Activated B cell treated with CpG ODN at 0.5 μM for 24 hours (primary cell): ENCODE measurements at regions of chr6 and their contacts with region 1.

Region 1: DNA sequence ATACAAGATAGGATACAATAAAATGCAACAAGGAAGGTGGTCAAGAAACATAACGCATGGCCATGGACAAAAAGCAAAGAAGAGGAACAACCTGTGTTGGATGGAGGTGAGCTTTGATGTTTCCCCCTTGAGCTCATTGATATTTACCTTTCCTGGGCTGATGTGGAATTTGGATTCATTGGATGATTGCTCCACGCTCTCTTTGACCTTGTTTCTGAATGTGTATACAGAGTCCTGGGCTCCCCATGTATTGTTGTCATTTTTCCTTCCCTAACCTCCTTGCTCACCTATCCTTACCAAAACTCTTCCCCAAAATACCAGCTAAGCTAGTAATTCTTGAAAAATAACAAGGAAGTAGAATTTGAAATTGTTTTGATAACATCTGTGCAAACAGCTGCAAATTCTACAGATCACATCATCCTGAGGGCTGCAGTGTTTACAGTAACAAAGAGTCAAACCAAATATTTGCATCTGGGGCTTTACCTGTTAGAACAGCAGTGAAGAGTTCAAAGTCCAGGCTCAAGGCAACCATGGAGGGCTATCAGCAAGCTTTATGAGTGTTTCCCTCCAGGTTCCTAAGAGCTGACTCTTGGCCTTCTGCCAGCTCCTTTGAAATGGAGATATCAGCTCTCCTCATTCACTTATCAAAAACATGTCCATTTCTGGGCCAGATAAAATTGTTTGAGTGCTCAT is 214.3 kb upstream of the MARCKS start:
- DNase-seq: no peak
- ATAC-seq: peak; percentile 66
- H3K4me3 Mint-ChIP-seq: peak overlapping the region; percentile 2
- H3K27ac Mint-ChIP-seq: peak overlapping the region; percentile 54
- H3K4me1 Mint-ChIP-seq: peaks cover 53% of the 10 kb centered on the region
- H3K27me3 Mint-ChIP-seq: no peaks in the 10 kb centered on the region
- CTCF ChIP-seq: no peak

Region 2: GRCh38 chr6:113596387-113597230 is 46.3 kb before region 1 on chr6:
- CTCF ChIA-PET with region 1: no interaction called
- POLR2A ChIA-PET with region 1: interaction called, 10 read pairs
- intact Hi-C with region 1: no loop called
- DNase-seq: no peak
- ATAC-seq: peak; percentile 10
- H3K4me3 Mint-ChIP-seq: no peak overlapping the region
- H3K27ac Mint-ChIP-seq: no peak overlapping the region
- H3K4me1 Mint-ChIP-seq: peaks cover 38% of the 10 kb centered on the region
- H3K27me3 Mint-ChIP-seq: no peaks in the 10 kb centered on the region
- CTCF ChIP-seq: no peak

Region 3: DNA sequence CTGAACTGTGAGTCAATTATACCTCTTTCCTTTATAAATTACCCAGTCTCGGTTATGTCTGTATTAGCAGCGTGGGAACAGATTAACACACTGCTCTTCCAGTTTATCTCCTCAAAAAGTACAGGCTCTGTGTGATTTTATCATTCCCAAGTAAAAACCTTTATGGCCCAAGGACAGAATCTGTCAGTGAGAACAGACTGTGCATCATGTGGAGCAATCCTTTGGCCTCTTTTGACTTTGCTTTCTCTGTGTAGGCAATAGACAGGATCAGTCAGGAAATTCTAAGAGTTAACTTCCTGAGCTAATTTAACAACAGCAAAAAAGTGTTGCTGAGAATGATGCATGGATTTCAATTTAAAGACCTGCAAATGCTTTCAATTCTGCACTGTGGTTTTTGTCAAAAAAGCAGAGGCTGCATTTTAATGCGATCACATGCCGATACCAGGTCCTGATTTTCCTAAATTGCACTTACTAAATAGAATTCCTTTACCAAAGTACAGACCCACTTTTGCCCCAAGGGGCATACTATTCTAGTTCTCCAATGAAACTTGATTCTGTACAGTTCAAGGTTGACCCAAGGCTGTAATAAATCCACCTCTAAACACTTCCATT is 32.4 kb before region 1 on chr6:
- CTCF ChIA-PET with region 1: no interaction called
- POLR2A ChIA-PET with region 1: no interaction called
- intact Hi-C with region 1: no loop called
- DNase-seq: no peak
- ATAC-seq: no peak
- H3K4me3 Mint-ChIP-seq: no peak overlapping the region
- H3K27ac Mint-ChIP-seq: no peak overlapping the region
- H3K4me1 Mint-ChIP-seq: no peaks in the 10 kb centered on the region
- H3K27me3 Mint-ChIP-seq: no peaks in the 10 kb centered on the region
- CTCF ChIP-seq: no peak

Region 4: DNA sequence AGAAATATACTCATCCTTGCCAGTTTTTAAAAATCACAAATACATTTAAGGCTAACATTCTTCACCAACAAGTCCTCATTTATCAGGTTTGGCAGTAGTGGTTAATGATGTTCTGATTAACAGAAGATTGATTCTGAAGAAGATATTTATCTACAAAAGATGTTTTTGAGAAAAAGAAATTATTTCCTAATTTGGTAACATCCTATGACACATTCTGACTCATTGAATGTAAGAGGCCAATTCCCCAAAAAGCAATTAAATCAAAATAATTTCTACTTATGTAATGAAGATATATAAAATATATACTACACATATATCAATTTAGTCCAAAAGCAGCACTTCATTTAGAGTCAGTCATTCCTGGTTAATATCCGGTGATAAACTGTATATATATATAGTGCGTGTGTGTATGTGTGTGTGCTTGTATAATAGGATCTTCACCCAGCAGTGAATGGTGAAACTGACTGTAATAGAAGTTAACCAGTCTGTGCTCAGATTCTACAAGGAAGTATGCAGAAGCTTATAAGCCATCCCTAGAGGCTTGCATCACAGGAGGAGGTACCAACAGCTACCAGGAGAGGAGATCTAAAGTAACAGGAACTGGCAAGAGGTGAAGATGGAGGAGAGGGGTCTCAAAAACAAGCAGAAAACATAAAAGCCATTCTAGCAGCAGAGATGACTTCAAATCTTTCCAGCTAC is 131.4 kb after region 1 on chr6:
- CTCF ChIA-PET with region 1: no interaction called
- POLR2A ChIA-PET with region 1: no interaction called
- intact Hi-C with region 1: no loop called
- DNase-seq: no peak
- ATAC-seq: peak; percentile 83
- H3K4me3 Mint-ChIP-seq: no peak overlapping the region
- H3K27ac Mint-ChIP-seq: peak overlapping the region; percentile 2
- H3K4me1 Mint-ChIP-seq: peaks cover 6% of the 10 kb centered on the region
- H3K27me3 Mint-ChIP-seq: no peaks in the 10 kb centered on the region
- CTCF ChIP-seq: no peak